AG04450 (cell line): ENCODE measurements at regions of chr4 and their contacts with region 1.

Region 1: DNA sequence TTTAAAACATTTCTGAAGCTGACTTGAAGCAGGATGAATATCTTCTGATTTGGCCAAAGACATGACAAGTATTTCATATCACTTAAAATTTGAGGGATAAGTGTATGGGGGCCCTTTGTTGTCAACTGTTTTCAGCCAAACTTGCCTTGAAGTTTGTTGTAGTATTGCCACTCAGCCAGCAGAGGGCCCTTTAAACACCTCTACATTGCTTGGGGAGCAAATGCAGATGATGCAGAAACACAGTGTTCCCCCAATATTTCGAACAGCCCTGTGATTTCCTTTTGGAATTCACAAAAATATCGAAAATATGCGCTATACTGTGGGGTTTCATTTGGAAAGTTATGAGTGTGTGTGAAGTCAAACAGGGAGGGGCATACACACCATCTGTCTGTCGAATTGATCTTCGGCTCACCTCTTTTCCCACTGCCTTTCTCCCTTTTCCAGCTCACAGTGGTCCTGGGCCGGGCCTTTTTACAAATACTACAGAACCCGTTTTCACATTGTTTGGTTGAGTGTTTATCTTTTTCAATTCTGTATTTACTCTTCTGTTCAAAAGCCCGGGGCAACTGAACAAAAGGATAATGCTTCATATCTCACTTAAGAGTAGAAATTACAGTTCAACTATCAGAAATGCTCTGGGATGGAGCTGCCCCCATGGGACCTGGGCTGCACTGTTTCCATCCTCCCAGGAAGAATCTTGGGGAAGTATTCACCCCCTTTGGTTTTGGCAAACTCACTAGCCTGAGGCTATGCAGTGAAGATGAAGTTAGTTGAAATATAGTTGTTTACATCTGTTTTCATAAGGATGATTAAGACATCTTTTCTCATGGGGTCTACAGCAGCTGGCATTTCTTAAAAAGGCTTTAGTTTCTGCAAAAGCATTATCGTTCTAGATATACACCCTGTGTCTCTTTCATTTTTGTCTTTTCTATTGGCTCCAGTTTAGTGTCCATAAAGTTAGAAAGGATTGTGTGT is 137.6 kb downstream of the EGF start:
- DNase-seq: peak; percentile 20
- H3K4me3 ChIP-seq: no peak overlapping the region
- H3K27ac ChIP-seq: no peak overlapping the region
- H3K27me3 ChIP-seq: no peaks in the 10 kb centered on the region
- CTCF ChIP-seq: peak; percentile 88

Region 2: DNA sequence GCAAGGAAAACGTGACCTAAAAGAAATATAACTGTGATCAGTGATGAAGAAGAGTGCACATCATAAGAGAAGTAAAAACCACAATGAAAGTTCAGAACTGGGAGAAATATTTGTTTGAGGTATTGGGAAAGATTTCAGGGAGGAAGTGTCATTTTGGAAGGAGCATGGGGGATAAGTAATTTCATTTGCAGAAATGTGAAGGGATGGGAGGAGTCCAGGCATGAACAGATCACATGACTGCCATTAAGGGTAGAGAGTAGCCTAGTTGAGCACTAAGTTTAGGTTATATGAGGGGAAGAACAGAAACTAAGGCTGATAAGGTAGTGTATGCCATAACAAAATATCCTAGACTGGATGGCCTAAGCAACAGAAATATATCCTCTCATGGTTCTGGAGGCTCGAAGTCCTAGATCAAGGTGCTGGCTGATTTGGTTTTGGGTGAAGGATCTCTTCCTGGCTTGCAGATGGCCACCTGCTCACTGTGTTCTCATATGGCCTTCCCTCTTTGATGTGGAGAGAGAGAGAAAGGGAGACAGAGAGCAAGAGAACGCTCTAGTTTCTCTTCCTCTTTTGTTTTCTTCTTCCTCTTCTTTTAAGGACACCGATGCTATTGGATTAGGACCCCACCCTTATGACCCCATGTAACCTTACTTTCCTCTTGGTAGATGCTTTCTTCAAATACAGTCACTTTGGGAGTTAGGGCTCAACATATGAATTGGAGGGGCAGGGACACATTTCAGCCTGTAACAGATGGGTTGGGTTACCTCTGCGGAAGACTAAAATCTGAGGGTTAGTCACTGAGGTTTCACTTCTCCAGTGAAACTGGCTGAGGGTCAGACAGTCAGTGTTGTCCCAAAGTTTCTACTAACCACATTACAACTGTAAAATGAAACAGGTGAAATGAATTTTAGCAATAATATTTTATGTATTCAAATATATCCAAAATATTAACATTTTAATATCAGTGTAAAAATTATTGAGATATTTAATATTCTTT is 59.7 kb before region 1 on chr4:
- CTCF ChIA-PET with region 1: no interaction called
- POLR2A ChIA-PET with region 1: no interaction called
- DNase-seq: no peak
- H3K4me3 ChIP-seq: no peak overlapping the region
- H3K27ac ChIP-seq: no peak overlapping the region
- H3K27me3 ChIP-seq: peaks cover 3% of the 10 kb centered on the region
- CTCF ChIP-seq: no peak

Region 3: GRCh38 chr4:110020139-110020538 is 30.1 kb before region 1 on chr4:
- CTCF ChIA-PET with region 1: interaction called, 15 read pairs
- POLR2A ChIA-PET with region 1: no interaction called
- DNase-seq: no peak
- H3K4me3 ChIP-seq: no peak overlapping the region
- H3K27ac ChIP-seq: no peak overlapping the region
- H3K27me3 ChIP-seq: peaks cover 2% of the 10 kb centered on the region
- CTCF ChIP-seq: no peak

Region 4: DNA sequence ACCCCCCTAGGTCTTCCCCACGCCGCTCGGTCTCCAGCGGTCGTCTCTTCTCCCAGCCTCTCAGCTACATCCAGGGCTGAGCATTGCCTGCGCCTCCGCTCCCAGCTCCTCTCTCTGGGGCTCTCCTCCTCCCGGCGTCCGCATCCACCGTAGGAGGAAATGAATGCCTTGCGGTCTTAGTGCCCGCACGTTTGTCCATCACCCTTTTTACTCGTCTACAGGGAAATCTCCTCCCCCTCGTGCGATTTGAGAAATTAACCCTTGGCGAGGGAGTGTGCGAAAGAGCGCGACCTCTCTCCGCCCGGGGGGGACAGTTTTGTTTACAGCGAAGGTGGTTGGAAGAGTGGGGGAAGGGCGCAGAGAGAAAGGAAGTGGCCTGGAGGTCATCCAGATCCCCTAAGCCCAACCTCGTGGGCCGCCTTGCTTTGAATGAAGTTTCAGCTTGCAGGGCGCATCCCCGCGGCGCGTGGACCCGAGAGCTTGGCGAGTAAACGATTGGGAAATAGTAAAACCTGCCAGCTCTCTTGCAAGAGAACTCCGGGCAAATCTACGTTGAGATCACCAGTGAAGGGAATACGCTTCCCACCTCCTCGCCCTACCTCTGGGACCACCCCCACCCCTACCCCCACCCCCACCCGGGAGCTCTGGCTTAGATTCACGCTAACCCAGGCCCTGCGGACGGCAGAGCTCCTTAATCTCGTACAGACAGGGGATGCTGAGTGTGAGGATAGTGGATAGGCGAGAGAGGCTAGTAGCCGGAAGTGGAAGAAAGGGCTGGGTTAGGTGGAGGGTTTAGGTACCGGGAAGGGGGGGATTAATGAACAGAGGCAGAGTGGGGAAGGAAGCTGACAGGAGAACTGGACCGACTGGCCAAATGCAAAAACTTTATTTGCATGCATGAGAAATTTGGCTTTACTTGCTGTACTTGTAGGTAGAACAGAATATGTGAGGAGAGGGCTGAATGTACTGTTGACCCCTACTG is 148.5 kb after region 1 on chr4 and contains the start of gene ELOVL6:
- CTCF ChIA-PET with region 1: interaction called, 14 read pairs
- POLR2A ChIA-PET with region 1: no interaction called
- DNase-seq: peak; percentile 18
- H3K4me3 ChIP-seq: peak within 1 kb of the TSS; percentile 83
- H3K27ac ChIP-seq: peak within 1 kb of the TSS; percentile 47
- H3K27me3 ChIP-seq: no peaks in the 10 kb centered on the region
- CTCF ChIP-seq: no peak
- polyA plus RNA-seq, gene ELOVL6: 21.4 and 30.7 TPM in 2 replicates

Region 5: GRCh38 chr4:110211007-110211769 is 160.9 kb after region 1 on chr4:
- CTCF ChIA-PET with region 1: interaction called, 28 read pairs
- POLR2A ChIA-PET with region 1: no interaction called
- DNase-seq: no peak
- H3K4me3 ChIP-seq: no peak overlapping the region
- H3K27ac ChIP-seq: no peak overlapping the region
- H3K27me3 ChIP-seq: no peaks in the 10 kb centered on the region
- CTCF ChIP-seq: peak; percentile 90